Heart left ventricle (tissue), 16 donors: ENCODE measurements at regions of chrX and their contacts with region 1.

Region 1: DNA sequence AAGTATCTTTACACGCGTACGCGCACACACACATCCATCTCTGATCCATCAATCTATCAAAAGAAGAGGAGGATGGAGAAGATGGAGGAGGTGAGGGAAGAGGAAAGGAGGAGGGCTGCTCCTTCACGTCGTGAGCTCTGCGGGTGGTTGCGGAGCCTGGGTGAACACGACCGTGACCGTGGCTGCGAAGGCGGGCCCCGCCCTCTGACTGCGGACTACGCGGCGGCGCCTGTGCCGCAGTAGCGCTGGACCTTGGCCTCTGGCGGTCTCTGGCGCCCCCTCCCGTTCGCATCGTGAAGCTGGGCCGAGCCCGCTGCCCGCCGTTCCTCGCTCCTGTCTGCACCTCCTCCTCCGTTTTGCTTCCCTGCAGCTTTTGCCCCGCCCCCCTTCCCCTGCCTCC is 37.7 kb upstream of the ARAF start:
- DNase-seq: peak; percentile 80 to 92 (median 87)
- ATAC-seq: peak; percentile 95 to 99 (median 98)
- H3K4me3 ChIP-seq: peak overlapping the region; percentile 31 to 65 (median 56)
- H3K27ac ChIP-seq: peak overlapping the region in 2 of 12 donors; percentile 9 to 23
- H3K4me1 ChIP-seq: peaks cover 0 to 6% (median 0%) of the 10 kb centered on the region in 12 donors
- H3K27me3 ChIP-seq: no peaks in the 10 kb centered on the region
- CTCF ChIP-seq: peak; percentile 71 to 84 (median 79)
- POLR2A ChIP-seq: no peak

Region 2: DNA sequence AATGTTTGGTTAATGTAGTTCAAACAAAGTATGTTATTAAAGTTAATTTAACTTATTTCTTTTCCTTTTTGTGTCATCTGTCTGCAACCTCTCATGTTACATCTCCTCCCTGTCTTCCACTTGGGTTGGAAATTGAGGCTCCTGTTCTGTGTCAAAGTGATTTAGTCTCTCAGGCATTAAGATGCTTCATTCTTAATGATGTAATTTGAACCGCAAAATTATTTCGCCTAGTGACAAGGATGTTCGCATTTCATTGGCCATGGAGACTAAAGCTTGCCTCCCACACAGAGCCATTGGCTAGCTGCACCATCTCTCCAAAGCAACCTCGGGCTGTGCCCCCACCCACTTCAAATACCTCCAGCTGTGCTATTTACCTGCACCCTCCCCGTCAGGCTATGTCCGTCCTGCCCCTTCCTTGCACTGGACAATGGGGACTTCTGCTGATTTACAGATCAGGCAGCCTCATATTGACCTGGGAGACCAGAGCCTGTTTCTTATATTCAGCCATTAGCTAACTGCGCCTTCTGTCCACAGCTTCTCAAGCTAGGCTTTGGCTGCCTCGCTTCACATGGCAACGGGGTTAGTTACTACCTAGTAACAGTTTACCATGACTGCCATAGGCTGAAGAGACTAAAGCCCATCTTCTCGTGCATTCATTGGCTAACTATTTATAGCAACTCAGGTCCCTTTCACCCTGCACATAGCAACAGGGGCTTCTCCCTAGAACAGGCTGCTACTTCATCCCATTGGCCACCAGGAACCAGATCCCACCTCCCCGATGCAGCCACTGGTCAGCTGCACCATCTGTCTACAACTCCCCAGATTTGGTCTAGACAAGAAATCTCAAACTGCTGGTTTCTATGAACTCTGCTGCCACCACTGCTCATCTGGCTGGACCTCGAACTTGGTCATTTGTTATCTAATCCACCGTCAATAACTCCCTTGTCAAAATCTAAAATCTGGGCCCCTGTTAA is 161.5 kb before region 1 on chrX:
- intact Hi-C with region 1: loop called in 1 of 10 experiments (anchors 10 kb)
- DNase-seq: peak; percentile 71 to 83 (median 81)
- ATAC-seq: peak; percentile 93 to 96 (median 96)
- H3K4me3 ChIP-seq: peak overlapping the region in 10 of 12 donors; percentile 32 to 60 (median 46)
- H3K27ac ChIP-seq: peak overlapping the region; percentile 39 to 91 (median 66)
- H3K4me1 ChIP-seq: peaks cover 0 to 4% (median 0%) of the 10 kb centered on the region in 12 donors
- H3K27me3 ChIP-seq: peaks cover 0 to under 1% (median 0%) of the 10 kb centered on the region in 9 donors
- CTCF ChIP-seq: peak in 5 of 12 donors; percentile 10 to 30 (median 12)
- POLR2A ChIP-seq: no peak

Region 3: GRCh38 chrX:47384502-47384901 is 138.8 kb before region 1 on chrX:
- intact Hi-C with region 1: loop called in 7 of 10 experiments (anchors 5 to 10 kb)
- DNase-seq: peak in 4 of 5 donors; percentile 32 to 55 (median 46)
- ATAC-seq: peak in 3 of 4 donors; percentile 60 to 66 (median 63)
- H3K4me3 ChIP-seq: no peak overlapping the region
- H3K27ac ChIP-seq: no peak overlapping the region
- H3K4me1 ChIP-seq: no peaks in the 10 kb centered on the region
- H3K27me3 ChIP-seq: peaks cover 0 to 13% (median 0%) of the 10 kb centered on the region in 9 donors
- CTCF ChIP-seq: peak; percentile 55 to 88 (median 70)
- POLR2A ChIP-seq: no peak

Region 4: GRCh38 chrX:47482512-47483309 is 40.6 kb before region 1 on chrX and contains the start of gene ZNF41:
- intact Hi-C with region 1: loop called in 1 of 10 experiments (anchors 2 kb)
- DNase-seq: peak; percentile 69 to 84 (median 78)
- ATAC-seq: peak; percentile 85 to 95 (median 94)
- H3K4me3 ChIP-seq: peak within 1 kb of the TSS; percentile 45 to 99 (median 83)
- H3K27ac ChIP-seq: peak within 1 kb of the TSS; percentile 93 to 100 (median 98)
- H3K4me1 ChIP-seq: peaks cover 0 to 26% (median 2%) of the 10 kb centered on the region in 12 donors
- H3K27me3 ChIP-seq: no peaks in the 10 kb centered on the region
- CTCF ChIP-seq: no peak
- POLR2A ChIP-seq: peak in 1 of 2 donors; percentile 42
- total RNA-seq, gene ZNF41: 10.3 to 19.6 (median 13.1) TPM

Region 5: DNA sequence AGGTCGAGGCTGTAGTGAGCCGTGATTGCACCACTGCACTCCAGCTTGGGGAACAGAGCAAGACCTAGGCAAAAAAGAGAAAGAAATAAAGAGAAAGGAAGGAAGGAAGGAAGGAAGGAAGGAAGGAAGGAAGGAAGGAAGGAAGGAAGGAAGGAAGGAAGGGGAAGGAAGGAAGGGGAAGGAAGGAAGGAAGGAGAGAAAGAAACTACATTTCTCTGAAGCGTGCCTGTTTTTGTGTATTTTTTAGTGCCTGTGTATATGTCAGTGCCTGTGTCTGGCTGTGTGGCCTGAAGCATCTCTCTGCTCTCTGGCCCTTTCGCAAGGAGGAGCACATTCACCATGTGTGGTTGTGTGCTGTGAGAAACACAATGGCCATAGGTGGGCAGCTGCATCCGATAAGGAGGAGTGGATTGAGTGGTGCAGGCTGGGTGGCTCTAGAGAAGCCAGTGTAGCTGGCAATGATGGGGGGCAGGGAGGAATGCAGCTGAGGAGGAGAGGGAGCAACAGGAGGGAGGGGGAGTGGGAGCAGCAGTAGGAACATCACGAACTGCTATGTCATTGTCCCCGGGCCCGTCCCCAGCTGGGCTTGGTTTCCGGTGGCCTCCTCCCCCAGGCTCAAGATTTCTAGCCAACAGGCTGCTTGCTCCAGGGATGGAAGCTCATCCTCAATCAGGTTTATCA is 85.0 kb after region 1 on chrX:
- intact Hi-C with region 1: no loop called
- DNase-seq: no peak
- ATAC-seq: no peak
- H3K4me3 ChIP-seq: no peak overlapping the region
- H3K27ac ChIP-seq: no peak overlapping the region
- H3K4me1 ChIP-seq: no peaks in the 10 kb centered on the region
- H3K27me3 ChIP-seq: no peaks in the 10 kb centered on the region
- CTCF ChIP-seq: no peak
- POLR2A ChIP-seq: no peak